GM10248 (cell line): ENCODE measurements at regions of chr6 and their contacts with region 1.

Region 1: GRCh38 chr6:36402481-36402880 is 15.0 kb upstream of the ETV7 start:
- DNase-seq: no peak
- CTCF ChIP-seq: no peak

Region 2: DNA sequence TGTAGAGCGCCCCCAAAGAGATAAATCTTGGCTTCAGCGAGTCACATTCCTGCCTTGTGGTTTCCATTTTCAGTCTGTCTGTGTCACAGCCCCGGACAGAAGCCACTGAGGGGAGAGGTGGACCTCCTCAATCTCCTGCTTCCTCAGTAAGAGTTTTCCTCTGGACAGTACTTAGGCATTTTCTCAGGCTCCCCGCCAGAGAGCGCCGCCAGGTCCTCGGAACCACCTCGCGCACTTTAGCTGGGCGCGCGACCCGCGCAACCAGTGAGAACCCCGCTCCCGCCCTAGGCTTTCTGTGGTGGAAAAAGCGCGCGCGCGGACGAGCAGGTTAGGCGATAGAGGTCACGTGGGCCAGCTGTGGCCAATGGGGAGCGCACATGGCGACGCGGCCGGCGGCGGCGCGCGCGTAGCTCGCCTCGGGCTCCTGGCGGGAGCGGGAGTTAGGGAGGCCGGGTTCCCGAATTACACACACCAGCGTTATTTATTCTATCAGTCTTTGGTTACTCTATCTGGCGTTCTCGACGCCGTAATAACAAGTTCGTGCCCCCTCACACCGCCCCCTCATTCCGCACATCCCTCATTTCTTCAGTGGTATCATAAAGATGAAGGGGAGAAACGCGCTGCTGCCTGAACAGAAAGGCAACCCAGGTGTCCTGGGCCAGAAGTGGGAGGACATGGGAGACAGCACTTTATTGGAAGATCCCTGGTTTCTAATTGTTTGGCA is 20.8 kb after region 1 on chr6:
- CTCF ChIA-PET with region 1: interaction called, 13 read pairs
- POLR2A ChIA-PET with region 1: no interaction called
- DNase-seq: peak; percentile 97
- CTCF ChIP-seq: peak; percentile 75

Region 3: DNA sequence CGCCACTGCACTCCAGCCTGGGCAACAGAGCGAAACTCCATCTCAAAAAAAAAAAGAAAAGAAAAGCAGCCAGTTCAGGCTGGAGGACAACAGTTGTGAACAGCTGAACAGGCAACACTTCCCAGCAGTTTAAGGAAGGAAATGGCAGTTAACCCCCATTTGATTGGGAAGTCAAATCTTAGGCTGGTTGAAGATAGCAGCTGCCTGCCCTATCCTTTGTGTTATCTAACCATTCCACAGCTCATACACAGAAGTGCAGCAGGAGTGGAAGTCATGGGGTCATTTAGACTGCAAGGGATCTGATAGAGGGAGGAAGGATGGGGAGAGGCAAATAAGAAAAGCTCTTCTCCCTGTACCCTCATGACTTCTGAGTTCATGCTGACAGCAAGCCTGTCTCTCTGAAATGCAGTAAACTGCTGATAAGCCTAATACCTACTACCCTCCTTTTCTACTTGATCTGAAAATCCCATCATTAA is 75.6 kb after region 1 on chr6:
- CTCF ChIA-PET with region 1: no interaction called
- POLR2A ChIA-PET with region 1: no interaction called
- DNase-seq: no peak
- CTCF ChIP-seq: no peak